Calu3 (cell line): ENCODE measurements at regions of chr6 and their contacts with region 1.

Region 1: DNA sequence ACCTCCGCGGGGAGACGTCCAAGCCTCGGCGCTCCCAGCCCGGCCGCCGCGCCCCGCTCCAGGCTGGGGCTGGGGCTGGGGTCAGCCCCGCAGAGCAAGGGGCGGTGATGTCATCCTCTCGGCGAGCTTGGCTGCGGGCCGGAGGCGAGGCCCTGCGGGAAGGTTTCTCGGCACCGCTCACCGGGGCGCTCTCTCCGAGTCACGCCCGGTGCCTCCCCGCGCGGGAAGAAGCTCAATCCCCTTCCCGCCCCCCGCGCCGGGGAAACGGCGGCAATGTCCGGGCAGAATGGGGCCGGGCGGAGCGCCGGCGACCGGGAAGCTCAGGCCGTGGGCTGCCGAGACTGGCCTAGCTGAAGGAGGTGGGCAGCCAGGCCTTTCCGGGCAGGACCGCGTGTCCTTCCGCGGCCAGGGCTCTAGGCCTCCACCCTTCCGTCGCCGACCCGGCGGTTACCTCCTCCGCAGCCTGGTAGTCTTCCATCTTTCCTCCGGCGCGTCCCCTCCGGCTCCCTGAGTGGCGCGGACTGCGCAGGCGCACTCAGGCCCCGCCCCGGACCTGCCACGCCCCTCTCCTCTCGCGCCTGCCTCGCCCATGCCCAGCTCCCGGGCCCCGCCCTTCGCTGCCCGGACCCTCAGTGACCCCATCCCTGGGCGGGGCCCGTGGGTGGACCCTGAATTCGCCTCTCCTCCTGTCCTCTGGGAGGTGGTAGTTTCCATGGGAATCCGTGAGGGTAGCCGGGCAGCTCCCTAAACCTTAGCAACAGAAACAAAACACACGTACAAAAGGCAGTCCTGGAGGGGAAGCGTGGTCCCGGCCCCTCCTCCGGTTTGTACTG is at the start of gene DYNLT1:
- DNase-seq: peak; percentile 98
- H3K4me3 Mint-ChIP-seq: peak within 1 kb of the TSS; percentile 93
- H3K27ac Mint-ChIP-seq: peak within 1 kb of the TSS; percentile 94
- H3K4me1 Mint-ChIP-seq: peaks cover 69% of the 10 kb centered on the region
- H3K27me3 Mint-ChIP-seq: no peaks in the 10 kb centered on the region
- CTCF ChIP-seq: no peak
- total RNA-seq, gene DYNLT1: 156 and 167 TPM in 2 replicates

Region 2: DNA sequence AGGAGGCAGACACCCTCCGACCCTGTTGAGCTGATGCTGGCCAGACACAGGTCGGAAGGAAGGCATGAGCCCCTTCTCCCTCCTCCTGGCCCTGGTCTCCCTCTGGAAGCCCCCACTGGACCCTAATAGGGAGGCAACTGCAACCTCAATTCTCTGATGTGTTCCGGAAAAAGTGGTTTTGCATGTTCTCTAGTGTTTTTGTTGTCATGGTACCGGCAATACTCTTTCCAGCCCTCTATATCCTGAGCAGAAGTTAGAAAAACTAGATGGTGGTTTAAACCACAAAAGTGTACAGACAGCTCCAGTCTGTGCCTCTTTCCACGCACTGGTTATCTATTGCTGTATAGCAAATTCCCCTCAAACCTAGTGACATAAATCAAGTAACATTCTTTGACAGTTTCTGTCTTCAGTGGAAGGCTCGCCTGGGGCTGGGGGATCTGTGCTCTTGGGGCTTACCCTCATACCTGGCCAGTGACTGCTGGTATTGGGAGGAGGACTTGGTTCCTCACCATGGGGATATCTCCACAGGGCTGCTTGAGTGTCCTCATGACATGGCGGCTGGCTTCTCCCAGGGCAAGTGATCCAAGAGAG is 42.4 kb after region 1 on chr6:
- CTCF ChIA-PET with region 1: interaction called, 13 read pairs
- intact Hi-C with region 1: loop called (anchors 5 kb)
- DNase-seq: no peak
- H3K4me3 Mint-ChIP-seq: no peak overlapping the region
- H3K27ac Mint-ChIP-seq: no peak overlapping the region
- H3K4me1 Mint-ChIP-seq: peaks cover 10% of the 10 kb centered on the region
- H3K27me3 Mint-ChIP-seq: no peaks in the 10 kb centered on the region
- CTCF ChIP-seq: no peak

Region 3: GRCh38 chr6:158694913-158695312 is 50.5 kb after region 1 on chr6:
- CTCF ChIA-PET with region 1: interaction called, 13 read pairs
- intact Hi-C with region 1: loop called (anchors 5 kb)
- DNase-seq: no peak
- H3K4me3 Mint-ChIP-seq: no peak overlapping the region
- H3K27ac Mint-ChIP-seq: no peak overlapping the region
- H3K4me1 Mint-ChIP-seq: no peaks in the 10 kb centered on the region
- H3K27me3 Mint-ChIP-seq: no peaks in the 10 kb centered on the region
- CTCF ChIP-seq: no peak

Region 4: GRCh38 chr6:158999666-159000403 is 355.4 kb after region 1 on chr6 and contains the start of gene RSPH3:
- CTCF ChIA-PET with region 1: no interaction called
- intact Hi-C with region 1: loop called (anchors 5 kb)
- DNase-seq: peak; percentile 97
- H3K4me3 Mint-ChIP-seq: peak within 1 kb of the TSS; percentile 100
- H3K27ac Mint-ChIP-seq: peak within 1 kb of the TSS; percentile 88
- H3K4me1 Mint-ChIP-seq: peaks cover 36% of the 10 kb centered on the region
- H3K27me3 Mint-ChIP-seq: no peaks in the 10 kb centered on the region
- CTCF ChIP-seq: no peak
- total RNA-seq, gene RSPH3: 12.5 and 14.6 TPM in 2 replicates